ENCODE measurements at regions of chr1 and their contacts with region 1.

Region 1: GRCh38 chr1:178542560-178543356 is 29.8 kb downstream of the TEX35 start:
- DNase-seq: peak; percentile 70 to 94
- H3K4me3 ChIP-seq: peak overlapping the region; percentile 67
- H3K27ac ChIP-seq: peak overlapping the region; percentile 58
- H3K4me1 ChIP-seq: peaks cover 52% of the 10 kb centered on the region
- H3K27me3 ChIP-seq: no peaks in the 10 kb centered on the region
- CTCF ChIP-seq: peak; percentile 99

Region 2: GRCh38 chr1:177517551-177517950 is 1025.2 kb before region 1 on chr1:
- CTCF ChIA-PET with region 1: no interaction called
- POLR2A ChIA-PET with region 1: no interaction called
- intact Hi-C with region 1: no loop called
- DNase-seq: no peak
- H3K4me3 ChIP-seq: no peak overlapping the region
- H3K27ac ChIP-seq: no peak overlapping the region
- H3K4me1 ChIP-seq: no peaks in the 10 kb centered on the region
- H3K27me3 ChIP-seq: no peaks in the 10 kb centered on the region
- CTCF ChIP-seq: no peak

Region 3: DNA sequence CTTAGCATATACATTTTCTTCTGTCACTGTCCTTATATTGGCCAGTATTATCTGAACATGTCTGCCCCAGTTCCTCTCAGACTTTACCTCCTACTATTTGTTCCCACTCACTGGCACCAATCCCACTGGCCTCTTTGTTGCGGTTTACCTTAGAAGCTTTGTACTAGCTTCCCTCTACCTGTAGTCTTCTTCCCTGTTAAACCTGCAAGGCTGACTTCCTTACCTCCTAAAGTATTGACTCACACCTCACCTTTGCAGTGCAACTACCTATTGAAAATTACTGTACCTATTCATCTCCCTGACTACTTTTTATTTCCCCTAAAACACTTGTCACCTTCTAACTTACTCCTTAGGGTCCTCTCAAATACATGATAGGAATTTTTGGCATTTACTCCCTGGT is 157.1 kb before region 1 on chr1:
- CTCF ChIA-PET with region 1: no interaction called
- POLR2A ChIA-PET with region 1: interaction called, 54 read pairs
- intact Hi-C with region 1: no loop called
- DNase-seq: no peak
- H3K4me3 ChIP-seq: no peak overlapping the region
- H3K27ac ChIP-seq: no peak overlapping the region
- H3K4me1 ChIP-seq: no peaks in the 10 kb centered on the region
- H3K27me3 ChIP-seq: no peaks in the 10 kb centered on the region
- CTCF ChIP-seq: no peak

Region 4: GRCh38 chr1:178684542-178685000 is 141.8 kb after region 1 on chr1:
- CTCF ChIA-PET with region 1: interaction called, 6 read pairs
- POLR2A ChIA-PET with region 1: interaction called, 4 read pairs
- intact Hi-C with region 1: loop called (anchors 2 kb)
- DNase-seq: peak; percentile 16 to 97
- H3K4me3 ChIP-seq: peak overlapping the region; percentile 21; the same call in 1 of the 2 replicates
- H3K27ac ChIP-seq: peak overlapping the region; percentile 96
- H3K4me1 ChIP-seq: peaks cover 49% of the 10 kb centered on the region
- H3K27me3 ChIP-seq: no peaks in the 10 kb centered on the region
- CTCF ChIP-seq: no peak

Region 5: DNA sequence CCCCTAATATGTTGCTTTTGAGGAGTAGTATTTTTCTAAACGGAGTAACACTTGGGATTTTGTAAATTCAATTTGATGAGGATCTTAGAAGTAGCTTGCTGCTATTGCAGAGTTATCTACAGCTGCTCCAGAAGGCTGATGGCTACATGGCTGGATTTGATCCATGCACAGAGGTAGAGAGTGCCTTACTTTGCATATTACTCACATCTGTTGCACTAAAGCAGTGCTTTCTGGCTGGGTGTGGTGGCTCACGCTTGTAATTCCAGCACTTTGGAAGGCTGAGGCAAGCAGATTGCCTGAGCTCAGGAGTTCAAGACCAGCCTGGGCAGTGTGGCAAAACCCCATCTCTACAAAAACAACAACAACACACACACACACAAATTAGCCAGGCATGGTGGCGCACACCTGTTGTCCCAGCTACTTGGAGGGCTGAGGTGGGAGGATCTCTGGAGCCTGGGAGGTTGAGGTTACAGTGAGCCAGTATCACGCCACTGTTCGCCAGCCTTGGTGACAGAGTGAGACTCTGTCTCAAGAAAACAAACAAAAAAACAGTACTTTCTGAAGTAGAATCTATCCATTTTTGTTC is 206.9 kb after region 1 on chr1:
- CTCF ChIA-PET with region 1: no interaction called
- POLR2A ChIA-PET with region 1: no interaction called
- intact Hi-C with region 1: loop called (anchors 2 kb)
- DNase-seq: no peak
- H3K4me3 ChIP-seq: no peak overlapping the region
- H3K27ac ChIP-seq: no peak overlapping the region
- H3K4me1 ChIP-seq: no peaks in the 10 kb centered on the region
- H3K27me3 ChIP-seq: no peaks in the 10 kb centered on the region
- CTCF ChIP-seq: no peak

Region 6: GRCh38 chr1:178818416-178818815 is 275.7 kb after region 1 on chr1:
- CTCF ChIA-PET with region 1: no interaction called
- POLR2A ChIA-PET with region 1: interaction called, 3 read pairs
- intact Hi-C with region 1: loop called (anchors 5 kb)
- DNase-seq: no peak
- H3K4me3 ChIP-seq: no peak overlapping the region
- H3K27ac ChIP-seq: no peak overlapping the region
- H3K4me1 ChIP-seq: no peaks in the 10 kb centered on the region
- H3K27me3 ChIP-seq: no peaks in the 10 kb centered on the region
- CTCF ChIP-seq: no peak

Region 7: GRCh38 chr1:179002552-179003345 is 460.0 kb after region 1 on chr1:
- CTCF ChIA-PET with region 1: interaction called, 20 read pairs
- POLR2A ChIA-PET with region 1: no interaction called
- intact Hi-C with region 1: loop called (anchors 1 kb)
- DNase-seq: peak in 1 of 2 experiments; percentile 62
- H3K4me3 ChIP-seq: peak overlapping the region; percentile 5; the same call in 1 of the 2 replicates
- H3K27ac ChIP-seq: no peak overlapping the region
- H3K4me1 ChIP-seq: peaks cover 11% of the 10 kb centered on the region
- H3K27me3 ChIP-seq: no peaks in the 10 kb centered on the region
- CTCF ChIP-seq: peak; percentile 97

Region 8: DNA sequence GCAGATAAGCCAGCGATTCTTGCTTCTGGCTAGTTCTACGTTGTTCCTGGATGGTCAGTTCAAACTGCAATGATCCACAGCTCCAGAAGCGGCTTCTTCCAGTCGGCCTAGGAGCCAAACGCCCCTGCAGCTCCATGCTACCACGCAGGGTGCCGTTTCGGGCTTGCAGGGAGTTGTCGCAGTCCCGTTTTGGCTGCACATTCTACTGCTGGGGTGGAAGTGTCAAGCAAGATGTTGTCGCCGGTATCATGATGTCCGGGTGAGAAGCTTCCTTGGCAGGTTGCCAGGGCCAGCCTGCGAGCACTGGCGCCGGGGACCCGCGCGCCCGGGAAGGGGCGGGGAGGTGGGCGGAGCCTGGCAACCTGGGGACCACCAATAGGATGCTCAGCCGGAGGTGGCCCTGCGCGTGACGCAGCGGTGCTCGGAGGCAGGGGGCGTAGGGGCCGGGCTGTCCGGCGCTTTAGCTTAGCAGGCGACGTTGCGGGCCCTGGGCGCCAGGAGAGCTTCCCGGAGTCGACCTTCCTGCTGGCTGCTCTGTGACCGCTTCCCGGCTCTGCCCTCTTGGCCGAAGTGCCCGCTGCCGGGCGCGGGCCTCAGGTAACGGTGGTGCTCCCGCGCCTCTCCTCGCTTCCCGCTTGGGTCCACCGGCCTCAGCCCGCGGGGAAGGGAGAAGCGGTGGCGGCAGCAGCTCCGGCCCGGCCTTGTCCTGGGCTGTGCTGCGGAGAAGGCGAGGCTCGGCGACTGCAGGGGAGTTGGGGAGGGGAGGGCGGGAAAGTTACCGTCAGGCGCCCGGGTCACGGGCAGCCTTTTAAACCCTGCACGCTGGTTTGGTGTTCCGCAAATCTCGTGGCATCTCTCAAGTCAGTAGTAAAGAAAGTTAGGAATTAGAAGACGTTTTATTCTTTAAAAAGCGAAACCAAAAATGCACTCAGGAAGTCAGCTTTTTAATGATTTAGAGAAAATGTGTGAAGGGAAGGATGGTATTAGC is 750.9 kb after region 1 on chr1 and contains the start of gene SOAT1:
- CTCF ChIA-PET with region 1: no interaction called
- POLR2A ChIA-PET with region 1: interaction called, 7 read pairs
- intact Hi-C with region 1: loop called (anchors 2 kb)
- DNase-seq: peak; percentile 74 to 95
- H3K4me3 ChIP-seq: peak within 1 kb of the TSS; percentile 89
- H3K27ac ChIP-seq: peak within 1 kb of the TSS; percentile 75
- H3K4me1 ChIP-seq: peaks cover 21% of the 10 kb centered on the region
- H3K27me3 ChIP-seq: no peaks in the 10 kb centered on the region
- CTCF ChIP-seq: no peak
- total RNA-seq, gene SOAT1: 26.2 and 43.5 TPM in 2 replicates